ENCODE measurements at regions of chr3 and their contacts with region 1.

Region 1: GRCh38 chr3:52705688-52706686 is at the starts of genes GLT8D1 and SPCS1:
- DNase-seq: peak; percentile 77
- ATAC-seq: peak; percentile 91
- H3K4me3 Mint-ChIP-seq: peak within 1 kb of the TSS; percentile 96
- H3K27ac Mint-ChIP-seq: peak within 1 kb of the TSS; percentile 77
- H3K4me1 Mint-ChIP-seq: peaks cover 13% of the 10 kb centered on the region
- H3K27me3 Mint-ChIP-seq: no peaks in the 10 kb centered on the region
- CTCF ChIP-seq: no peak
- total RNA-seq, gene GLT8D1: 41.2 to 46.0 TPM (median 43.8 TPM) in 3 replicates
- total RNA-seq, gene SPCS1: 92.5 to 101 TPM (median 98.5 TPM) in 3 replicates

Region 2: DNA sequence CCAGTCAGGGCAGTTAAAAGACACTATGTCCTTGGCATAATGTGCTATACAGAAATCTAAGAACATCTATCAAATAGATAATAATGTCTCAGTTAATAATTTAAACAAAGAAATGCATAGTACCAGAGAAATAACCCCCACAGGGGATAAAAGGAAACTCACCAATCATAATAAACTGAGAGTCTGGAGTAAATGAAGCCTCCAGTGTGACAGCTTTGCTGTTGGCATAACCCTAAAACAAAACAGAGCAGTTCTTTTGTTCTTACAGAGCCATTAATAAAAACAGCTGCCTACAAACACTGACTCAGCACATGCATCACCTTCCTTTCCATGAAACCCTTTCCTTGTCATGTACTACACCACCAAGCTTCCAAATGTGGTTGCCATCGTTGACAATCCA is 447.0 kb before region 1 on chr3:
- CTCF ChIA-PET with region 1: no interaction called
- POLR2A ChIA-PET with region 1: no interaction called
- DNase-seq: no peak
- ATAC-seq: no peak
- H3K4me3 Mint-ChIP-seq: no peak overlapping the region
- H3K27ac Mint-ChIP-seq: no peak overlapping the region
- H3K4me1 Mint-ChIP-seq: no peaks in the 10 kb centered on the region
- H3K27me3 Mint-ChIP-seq: no peaks in the 10 kb centered on the region
- CTCF ChIP-seq: no peak

Region 3: GRCh38 chr3:52689151-52689550 is 16.8 kb before region 1 on chr3:
- CTCF ChIA-PET with region 1: no interaction called
- POLR2A ChIA-PET with region 1: interaction called, 11 read pairs
- DNase-seq: no peak
- ATAC-seq: no peak
- H3K4me3 Mint-ChIP-seq: no peak overlapping the region
- H3K27ac Mint-ChIP-seq: peak overlapping the region; percentile 88; the same call in 1 of the 2 replicates
- H3K4me1 Mint-ChIP-seq: peaks cover 23% of the 10 kb centered on the region
- H3K27me3 Mint-ChIP-seq: no peaks in the 10 kb centered on the region; the same call in 1 of the 2 replicates
- CTCF ChIP-seq: no peak

Measured in WTC11 (cell line).